ENCODE measurements at regions of chr22 and their contacts with region 1.

Region 1: DNA sequence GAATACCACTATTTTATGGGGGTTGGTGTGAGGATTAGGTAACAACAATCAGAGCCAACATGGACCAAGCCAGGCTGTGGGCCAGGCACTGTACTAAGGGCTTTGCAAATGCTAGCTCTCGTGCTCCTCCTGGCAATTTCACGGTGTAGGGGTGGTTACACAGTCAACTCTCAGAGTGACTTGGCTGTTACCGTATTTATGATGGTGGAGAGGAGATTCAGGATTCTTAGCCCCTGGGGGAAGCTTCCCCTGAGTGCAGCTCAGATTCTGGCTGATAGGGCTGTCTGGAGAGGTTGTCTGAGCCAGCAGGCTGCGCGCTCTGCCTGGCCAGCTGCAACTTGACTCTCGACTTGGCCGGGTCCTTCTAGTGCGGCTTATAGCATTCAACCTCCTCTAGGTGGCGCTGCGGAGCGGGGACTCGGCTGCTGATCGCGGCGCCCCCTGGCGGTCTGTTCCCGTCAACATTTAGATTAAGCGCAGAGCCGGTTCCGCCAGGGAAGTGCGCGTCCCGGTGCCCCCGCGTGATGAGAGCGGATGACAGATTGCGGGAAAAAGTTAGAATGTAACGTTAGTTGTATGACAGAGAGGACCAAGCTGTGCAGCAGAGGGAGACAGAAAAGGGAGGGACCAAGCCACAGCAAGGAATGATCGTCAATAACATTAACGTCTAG is 4.5 kb upstream of the NCF4 start:
- DNase-seq: peak; percentile 68
- H3K4me3 ChIP-seq: no peak overlapping the region
- H3K27ac ChIP-seq: no peak overlapping the region
- H3K27me3 ChIP-seq: peaks cover 13% of the 10 kb centered on the region
- CTCF ChIP-seq: peak; percentile 100

Region 2: DNA sequence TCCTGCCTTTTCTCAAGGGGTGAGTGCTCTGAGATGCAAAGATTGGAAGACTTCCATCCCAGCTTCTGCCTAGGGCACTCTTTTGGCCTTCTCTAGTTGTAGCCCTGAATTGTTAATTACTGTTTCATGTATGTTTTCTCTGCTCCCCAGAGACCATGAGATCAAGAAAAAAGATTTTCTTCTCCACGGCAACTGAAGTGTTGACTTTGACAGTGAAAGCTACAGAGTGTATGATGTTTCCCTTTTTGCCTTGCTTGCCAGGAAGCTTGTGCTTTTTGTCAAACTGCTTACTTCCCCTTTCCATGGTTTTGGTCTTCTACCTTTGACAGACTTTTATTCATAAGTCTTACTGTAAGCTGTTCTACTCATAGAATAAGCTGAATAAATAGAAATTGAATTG is 304.0 kb before region 1 on chr22:
- CTCF ChIA-PET with region 1: interaction called, 140 read pairs
- POLR2A ChIA-PET with region 1: no interaction called
- DNase-seq: no peak
- H3K4me3 ChIP-seq: no peak overlapping the region
- H3K27ac ChIP-seq: no peak overlapping the region
- H3K27me3 ChIP-seq: peaks cover 47% of the 10 kb centered on the region
- CTCF ChIP-seq: no peak

Region 3: DNA sequence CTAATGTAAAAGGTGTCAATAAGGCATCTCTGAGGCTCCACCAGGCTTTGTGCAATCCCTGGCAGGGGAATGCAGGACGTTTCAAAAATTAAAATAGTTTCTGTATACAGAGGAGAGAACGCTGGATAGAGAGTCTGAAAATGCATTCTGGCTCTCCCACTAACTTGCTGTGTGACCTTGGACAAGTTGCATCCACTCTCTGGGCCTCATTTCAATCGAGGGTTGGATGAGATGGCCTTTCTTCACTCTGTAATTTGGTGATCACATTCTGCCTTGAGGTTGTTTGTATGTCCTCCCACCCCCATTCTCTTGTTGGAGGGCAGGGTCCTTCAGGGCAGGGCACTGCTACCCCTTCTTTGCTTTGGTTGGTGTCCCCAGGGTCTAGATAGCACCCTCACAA is 231.2 kb before region 1 on chr22:
- CTCF ChIA-PET with region 1: no interaction called
- POLR2A ChIA-PET with region 1: no interaction called
- DNase-seq: no peak
- H3K4me3 ChIP-seq: no peak overlapping the region
- H3K27ac ChIP-seq: no peak overlapping the region
- H3K27me3 ChIP-seq: peaks cover 29% of the 10 kb centered on the region
- CTCF ChIP-seq: no peak

Region 4: DNA sequence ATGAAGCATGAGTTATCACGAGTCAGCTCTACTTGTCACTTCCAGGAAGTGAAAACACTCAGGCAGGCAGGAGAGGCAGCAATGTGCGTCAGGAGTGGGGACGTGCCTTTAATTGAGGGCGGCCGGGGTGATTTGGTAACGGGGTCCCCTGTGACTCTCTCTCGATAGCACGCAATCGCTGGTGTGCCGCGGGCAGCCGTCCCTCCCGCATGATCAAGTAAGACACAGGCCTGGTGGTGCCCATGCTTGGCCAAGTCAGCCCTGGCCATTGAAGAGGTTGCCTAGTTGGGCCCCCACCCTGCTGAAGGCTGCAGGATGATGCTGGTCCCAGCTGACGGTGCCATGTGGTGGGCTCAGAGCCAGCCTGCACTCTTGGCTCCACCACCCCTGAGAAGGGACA is 182.4 kb before region 1 on chr22:
- CTCF ChIA-PET with region 1: no interaction called
- POLR2A ChIA-PET with region 1: no interaction called
- DNase-seq: no peak
- H3K4me3 ChIP-seq: no peak overlapping the region
- H3K27ac ChIP-seq: no peak overlapping the region
- H3K27me3 ChIP-seq: peaks cover 11% of the 10 kb centered on the region
- CTCF ChIP-seq: no peak

Region 5: DNA sequence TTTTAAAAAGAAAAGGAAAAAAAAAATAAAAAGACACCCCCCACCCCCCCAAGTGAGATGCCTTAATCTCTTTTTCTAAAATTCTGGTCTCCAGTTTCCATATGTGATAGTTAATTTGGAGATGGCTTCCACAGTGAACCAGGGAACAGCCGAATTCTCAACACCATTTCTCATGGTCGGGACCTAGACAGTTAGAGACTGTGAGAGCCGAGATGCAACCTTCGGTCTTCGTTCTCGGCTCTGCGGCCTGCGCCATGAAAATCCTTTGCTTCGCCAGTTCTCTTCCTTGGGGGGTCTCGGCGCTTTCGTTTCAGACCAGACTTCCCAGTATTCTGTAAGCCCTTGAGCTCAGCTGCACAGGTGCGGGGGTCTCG is 153.4 kb before region 1 on chr22:
- CTCF ChIA-PET with region 1: no interaction called
- POLR2A ChIA-PET with region 1: no interaction called
- DNase-seq: no peak
- H3K4me3 ChIP-seq: no peak overlapping the region
- H3K27ac ChIP-seq: no peak overlapping the region
- H3K27me3 ChIP-seq: peaks cover 39% of the 10 kb centered on the region
- CTCF ChIP-seq: no peak

Region 6: GRCh38 chr22:36775964-36776669 is 80.1 kb before region 1 on chr22 and contains the start of gene IFT27:
- CTCF ChIA-PET with region 1: interaction called, 45 read pairs
- POLR2A ChIA-PET with region 1: no interaction called
- DNase-seq: peak; percentile 100
- H3K4me3 ChIP-seq: peak within 1 kb of the TSS; percentile 80
- H3K27ac ChIP-seq: peak within 1 kb of the TSS; percentile 31
- H3K27me3 ChIP-seq: no peaks in the 10 kb centered on the region
- CTCF ChIP-seq: no peak
- polyA plus RNA-seq, gene IFT27: 22.5 and 25.5 TPM in 2 replicates

Region 7: GRCh38 chr22:36839356-36840073 is 16.7 kb before region 1 on chr22:
- CTCF ChIA-PET with region 1: interaction called, 20 read pairs
- POLR2A ChIA-PET with region 1: no interaction called
- DNase-seq: no peak
- H3K4me3 ChIP-seq: no peak overlapping the region
- H3K27ac ChIP-seq: no peak overlapping the region
- H3K27me3 ChIP-seq: peaks cover 12% of the 10 kb centered on the region
- CTCF ChIP-seq: no peak

Region 8: DNA sequence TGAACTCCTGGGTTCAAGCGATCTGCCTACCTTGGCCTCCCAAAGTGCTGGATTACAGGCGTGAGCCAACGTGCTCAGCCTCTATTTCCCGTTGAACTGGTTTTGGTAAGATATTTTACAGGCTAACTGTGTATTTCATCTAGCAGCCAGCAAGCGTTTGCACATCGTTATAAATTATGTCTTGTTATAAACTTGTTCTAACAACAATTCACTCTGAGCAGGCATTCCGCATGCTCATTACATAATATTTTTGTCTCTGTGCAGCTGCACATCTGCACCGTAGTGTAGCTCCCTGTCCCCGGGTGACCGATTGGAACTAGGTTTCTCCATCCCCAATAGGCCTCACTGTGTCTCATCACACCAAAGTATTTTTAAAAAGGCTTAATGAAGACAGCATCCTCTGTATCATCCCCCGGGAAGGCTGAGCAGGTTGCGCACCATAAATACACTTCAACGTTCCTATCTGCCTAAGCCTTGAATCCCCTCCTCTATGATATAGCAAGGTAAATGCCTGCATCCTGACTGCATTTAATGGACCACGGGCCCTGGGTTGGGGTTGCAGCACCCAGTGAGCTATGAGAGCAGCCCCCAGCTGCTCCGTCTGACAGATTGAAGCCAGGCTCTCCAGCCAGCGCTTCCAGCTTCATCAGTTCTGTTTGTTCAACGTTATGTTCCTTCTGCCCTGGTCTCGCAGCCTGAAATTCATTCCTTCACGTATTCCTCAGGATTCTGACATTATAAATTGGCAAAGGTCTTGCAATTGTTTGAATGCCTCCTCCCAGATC is 115.3 kb after region 1 on chr22:
- CTCF ChIA-PET with region 1: interaction called, 14 read pairs
- POLR2A ChIA-PET with region 1: no interaction called
- DNase-seq: no peak
- H3K4me3 ChIP-seq: no peak overlapping the region
- H3K27ac ChIP-seq: no peak overlapping the region
- H3K27me3 ChIP-seq: peaks cover 27% of the 10 kb centered on the region
- CTCF ChIP-seq: no peak